SK-N-SH (cell line): ENCODE measurements at regions of chr18 and their contacts with region 1.

Region 1: GRCh38 chr18:33839441-33840211 is 261.6 kb downstream of the ASXL3 start:
- DNase-seq: peak; percentile 46
- H3K4me3 ChIP-seq: no peak overlapping the region; a peak in 1 of 4 replicates
- H3K27ac ChIP-seq: no peak overlapping the region
- H3K4me1 ChIP-seq: no peaks in the 10 kb centered on the region; a peak in 1 of 4 replicates
- H3K27me3 ChIP-seq: no peaks in the 10 kb centered on the region
- CTCF ChIP-seq: peak; percentile 83
- EP300 ChIP-seq: no peak
- RAD21 ChIP-seq: peak; percentile 81

Region 2: GRCh38 chr18:33577685-33578517 is 261.7 kb before region 1 on chr18 and contains the start of gene ASXL3:
- CTCF ChIA-PET with region 1: no interaction called
- POLR2A ChIA-PET with region 1: no interaction called
- DNase-seq: peak; percentile 91
- H3K4me3 ChIP-seq: peak within 1 kb of the TSS; percentile 62 to 72
- H3K27ac ChIP-seq: peak within 1 kb of the TSS in 1 of 2 experiments; percentile 56; a peak in 2 of 4 replicates
- H3K4me1 ChIP-seq: peaks cover 3% of the 10 kb centered on the region in 2 experiments; a peak in 2 of 4 replicates
- H3K27me3 ChIP-seq: peaks cover 37% of the 10 kb centered on the region
- CTCF ChIP-seq: no peak
- EP300 ChIP-seq: no peak
- RAD21 ChIP-seq: no peak
- polyA plus RNA-seq, gene ASXL3: 0.03 TPM in 1 of 2 replicates, not detected in the other

Region 3: GRCh38 chr18:33804258-33804657 is 35.4 kb before region 1 on chr18:
- CTCF ChIA-PET with region 1: interaction called, 11 read pairs
- POLR2A ChIA-PET with region 1: no interaction called
- DNase-seq: no peak
- H3K4me3 ChIP-seq: no peak overlapping the region
- H3K27ac ChIP-seq: no peak overlapping the region
- H3K4me1 ChIP-seq: no peaks in the 10 kb centered on the region; a peak in 2 of 4 replicates
- H3K27me3 ChIP-seq: no peaks in the 10 kb centered on the region
- CTCF ChIP-seq: no peak
- EP300 ChIP-seq: no peak
- RAD21 ChIP-seq: no peak

Region 4: GRCh38 chr18:33851546-33852078 is 12.0 kb after region 1 on chr18:
- CTCF ChIA-PET with region 1: interaction called, 16 read pairs
- POLR2A ChIA-PET with region 1: no interaction called
- DNase-seq: no peak
- H3K4me3 ChIP-seq: no peak overlapping the region
- H3K27ac ChIP-seq: no peak overlapping the region
- H3K4me1 ChIP-seq: no peaks in the 10 kb centered on the region
- H3K27me3 ChIP-seq: no peaks in the 10 kb centered on the region
- CTCF ChIP-seq: no peak
- EP300 ChIP-seq: no peak
- RAD21 ChIP-seq: no peak

Region 5: GRCh38 chr18:33960417-33960816 is 120.8 kb after region 1 on chr18:
- CTCF ChIA-PET with region 1: interaction called, 10 read pairs
- POLR2A ChIA-PET with region 1: no interaction called
- DNase-seq: no peak
- H3K4me3 ChIP-seq: no peak overlapping the region
- H3K27ac ChIP-seq: no peak overlapping the region
- H3K4me1 ChIP-seq: peaks cover 0 to 8% of the 10 kb centered on the region in 2 experiments; a peak in 2 of 4 replicates
- H3K27me3 ChIP-seq: no peaks in the 10 kb centered on the region
- CTCF ChIP-seq: no peak
- EP300 ChIP-seq: no peak
- RAD21 ChIP-seq: no peak

Region 6: GRCh38 chr18:34077599-34077998 is 238.0 kb after region 1 on chr18:
- CTCF ChIA-PET with region 1: interaction called, 10 read pairs
- POLR2A ChIA-PET with region 1: no interaction called
- DNase-seq: no peak
- H3K4me3 ChIP-seq: no peak overlapping the region
- H3K27ac ChIP-seq: no peak overlapping the region
- H3K4me1 ChIP-seq: no peaks in the 10 kb centered on the region
- H3K27me3 ChIP-seq: no peaks in the 10 kb centered on the region
- CTCF ChIP-seq: peak; percentile 29
- EP300 ChIP-seq: no peak
- RAD21 ChIP-seq: no peak

Region 7: DNA sequence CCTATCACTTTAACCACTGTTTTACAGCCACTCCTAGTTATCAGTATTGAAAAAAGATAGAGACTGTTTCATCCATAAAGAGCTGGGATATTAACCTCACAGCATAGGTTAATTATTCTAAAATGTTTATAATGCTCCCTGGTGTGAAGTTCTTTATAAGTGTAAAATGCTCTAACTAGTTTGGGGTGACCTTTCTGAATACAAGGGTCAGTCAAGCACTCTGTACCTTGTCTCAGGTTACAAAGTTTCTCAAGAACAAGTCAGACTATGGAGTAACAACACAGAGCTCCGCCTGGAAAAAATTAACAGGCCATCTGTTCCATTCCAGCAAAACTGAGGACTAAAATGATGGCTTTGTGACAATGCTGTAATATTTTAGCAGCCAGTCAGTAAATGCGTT is 277.7 kb after region 1 on chr18:
- CTCF ChIA-PET with region 1: interaction called, 34 read pairs
- POLR2A ChIA-PET with region 1: no interaction called
- DNase-seq: peak; percentile 36
- H3K4me3 ChIP-seq: no peak overlapping the region
- H3K27ac ChIP-seq: peak overlapping the region in 1 of 2 experiments; percentile 64; a peak in 2 of 4 replicates
- H3K4me1 ChIP-seq: peaks cover 3 to 4% of the 10 kb centered on the region in 2 experiments; a peak in 2 of 4 replicates
- H3K27me3 ChIP-seq: no peaks in the 10 kb centered on the region
- CTCF ChIP-seq: no peak
- EP300 ChIP-seq: peak in 1 of 2 experiments; percentile 46; a peak in 1 of 4 replicates
- RAD21 ChIP-seq: peak; percentile 9; the same call in 1 of the 2 replicates